Posterior vena cava (tissue), 2 donors: ENCODE measurements at regions of chr1 and their contacts with region 1.

Region 1: GRCh38 chr1:29394521-29395225 is 158.4 kb downstream of the PTPRU start:
- DNase-seq: peak; percentile 76

Region 2: GRCh38 chr1:29356663-29357062 is 38.0 kb before region 1 on chr1:
- intact Hi-C with region 1: no loop called
- DNase-seq: no peak

Region 3: GRCh38 chr1:29415156-29415830 is 20.6 kb after region 1 on chr1:
- intact Hi-C with region 1: no loop called
- DNase-seq: no peak

Region 4: GRCh38 chr1:30407865-30408580 is 1013.4 kb after region 1 on chr1:
- intact Hi-C with region 1: loop called in 1 of 2 experiments (anchors 5 kb)
- DNase-seq: peak; percentile 69